Activated CD4-positive, alpha-beta memory T cell treated with anti-CD3 and anti-CD28 coated beads for 36 hours (primary cell): ENCODE measurements at regions of chr12 and their contacts with region 1.

Region 1: DNA sequence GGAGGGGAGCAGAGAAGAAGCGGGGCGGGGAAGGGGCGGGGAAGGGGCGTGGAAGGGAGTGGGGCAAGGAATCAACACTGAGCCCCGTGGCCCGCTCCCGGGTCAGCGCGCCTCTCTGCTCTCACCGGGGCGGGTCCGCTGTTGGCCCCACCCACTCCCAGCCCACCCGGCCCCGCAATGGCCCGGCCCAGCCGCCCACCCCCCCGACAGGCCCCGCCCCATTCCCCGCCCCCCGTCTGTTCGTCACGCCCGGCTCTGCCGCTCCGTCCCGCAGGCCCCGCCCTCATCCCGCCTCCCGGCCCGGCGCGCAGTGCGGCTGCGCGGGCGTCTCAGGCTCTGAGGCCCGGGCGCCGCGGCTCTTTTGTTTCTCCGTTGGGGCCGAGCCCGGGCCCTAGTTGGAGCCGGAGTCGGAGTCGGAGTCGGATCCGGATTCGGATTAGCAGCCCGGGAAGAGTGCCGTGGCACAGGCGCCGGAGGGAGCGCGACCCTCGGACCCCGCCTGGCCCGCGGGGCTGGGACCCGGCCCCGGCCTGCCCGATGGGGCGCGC is at the start of gene ULK1:
- DNase-seq: peak; percentile 94
- H3K4me3 Mint-ChIP-seq: peak within 1 kb of the TSS; percentile 79
- H3K27ac Mint-ChIP-seq: peak within 1 kb of the TSS; percentile 54
- H3K4me1 Mint-ChIP-seq: peaks cover 12% of the 10 kb centered on the region
- H3K27me3 Mint-ChIP-seq: no peaks in the 10 kb centered on the region
- total RNA-seq, gene ULK1: 13.8 to 17.8 TPM

Region 2: GRCh38 chr12:131928711-131929580 is 34.6 kb after region 1 on chr12 and contains the start of gene PUS1:
- CTCF ChIA-PET with region 1: no interaction called
- POLR2A ChIA-PET with region 1: interaction called, 3 read pairs
- intact Hi-C with region 1: loop called (anchors 1 kb)
- DNase-seq: peak; percentile 97
- H3K4me3 Mint-ChIP-seq: peak within 1 kb of the TSS; percentile 97
- H3K27ac Mint-ChIP-seq: peak within 1 kb of the TSS; percentile 88
- H3K4me1 Mint-ChIP-seq: peaks cover 24% of the 10 kb centered on the region
- H3K27me3 Mint-ChIP-seq: no peaks in the 10 kb centered on the region
- total RNA-seq, gene PUS1: 48.6 to 53.9 TPM